GM10248 (cell line): ENCODE measurements at regions of chr15 and their contacts with region 1.

Region 1: DNA sequence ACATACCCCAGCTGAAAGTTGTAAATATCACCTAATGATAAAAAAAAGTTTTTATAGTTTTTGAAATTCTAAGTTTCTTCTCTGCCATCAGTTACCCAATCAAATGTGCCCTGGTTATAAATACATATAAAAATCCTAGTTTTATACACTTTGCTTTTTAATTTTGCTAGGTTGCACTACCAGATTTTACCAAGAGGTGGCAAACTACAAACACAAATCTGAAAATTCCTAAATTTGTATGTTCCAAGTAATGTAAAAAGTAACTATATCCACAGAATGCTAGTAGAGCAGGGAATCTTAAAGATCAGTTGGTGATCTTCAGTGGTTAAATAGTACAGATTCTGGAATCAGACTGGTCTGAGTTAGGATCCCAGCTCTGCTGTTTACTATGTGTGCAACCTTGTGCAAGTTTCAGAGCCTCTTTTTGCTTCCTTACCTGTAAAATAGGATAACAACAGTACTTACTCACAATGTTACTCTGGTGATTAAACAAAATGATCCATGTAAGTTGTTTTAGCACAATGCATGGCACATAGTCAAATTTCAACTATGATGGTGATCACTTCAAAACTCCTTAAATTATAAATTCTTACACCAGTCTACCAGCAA is 11.0 kb downstream of the TRPM7 start:
- DNase-seq: no peak
- CTCF ChIP-seq: peak; percentile 50

Region 2: DNA sequence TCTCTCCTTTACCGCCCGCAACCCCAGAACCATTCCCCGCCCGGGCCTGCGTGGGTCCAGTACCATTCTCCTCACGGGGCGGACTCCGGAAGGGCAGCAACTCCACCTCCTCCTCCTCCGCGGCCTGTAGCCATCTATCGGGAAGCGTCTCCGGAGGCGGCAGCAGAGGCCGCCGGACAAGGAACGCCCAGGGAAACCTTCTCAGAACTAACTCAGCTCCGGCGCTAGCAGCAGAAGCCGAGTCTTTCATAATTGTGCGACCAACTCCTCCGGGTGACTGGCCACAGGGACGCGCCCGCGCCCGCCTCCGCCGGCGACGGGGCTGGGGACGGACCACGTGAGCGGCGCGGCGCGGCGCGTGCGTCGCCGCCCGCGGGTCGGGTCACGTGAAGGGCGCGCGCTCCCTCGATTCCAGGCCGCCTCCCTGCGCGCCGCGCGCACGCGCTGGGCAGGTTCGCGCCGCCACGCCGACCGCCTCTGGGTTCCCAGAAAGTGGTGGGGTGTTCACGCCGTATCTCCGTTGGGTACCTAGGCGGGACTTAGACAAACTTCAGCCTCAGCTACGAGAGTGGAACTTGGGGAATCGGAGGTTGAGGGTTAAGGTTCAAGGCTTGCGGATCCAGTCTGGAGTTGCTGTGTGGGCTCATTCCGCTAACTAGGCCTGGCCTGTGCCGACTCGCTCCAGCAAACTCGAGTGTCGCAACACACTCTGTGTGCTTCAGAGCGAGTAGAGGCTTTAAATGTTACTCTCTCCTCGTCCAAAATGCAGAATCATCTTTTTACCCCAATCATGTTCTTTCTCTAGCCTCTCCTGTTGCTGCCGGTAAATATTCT is 11.0 kb after region 1 on chr15 and contains the start of gene TRPM7:
- CTCF ChIA-PET with region 1: interaction called, 16 read pairs
- POLR2A ChIA-PET with region 1: no interaction called
- DNase-seq: peak; percentile 92
- CTCF ChIP-seq: no peak

Region 3: GRCh38 chr15:50908210-50909009 is 232.8 kb after region 1 on chr15 and contains the start of gene AP4E1:
- CTCF ChIA-PET with region 1: interaction called, 14 read pairs
- POLR2A ChIA-PET with region 1: no interaction called
- DNase-seq: peak; percentile 87
- CTCF ChIP-seq: peak; percentile 90